AG04449 (cell line): ENCODE measurements at regions of chr11 and their contacts with region 1.

Region 1: GRCh38 chr11:31340903-31341572 is 28.5 kb downstream of the DCDC1 start:
- DNase-seq: no peak
- H3K4me3 ChIP-seq: no peak overlapping the region
- CTCF ChIP-seq: peak; percentile 51

Region 2: DNA sequence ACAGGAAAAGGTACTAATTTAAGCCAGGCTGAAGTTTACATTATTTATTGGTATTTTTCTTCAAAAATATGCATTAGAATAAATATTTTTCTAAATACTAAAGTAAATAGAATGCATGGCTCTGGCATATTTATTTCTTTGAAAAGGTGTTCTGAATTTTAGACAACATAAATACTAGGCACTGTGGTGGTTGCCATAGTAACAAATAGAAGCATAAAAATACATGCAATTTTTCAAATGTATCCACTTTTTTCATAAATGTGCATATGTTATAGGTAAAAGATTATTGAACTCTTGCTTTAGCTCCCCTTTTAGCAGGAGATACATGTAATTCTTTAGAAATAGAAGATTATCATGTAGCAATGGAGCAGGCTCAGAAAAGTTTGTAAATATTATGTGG is 10.1 kb after region 1 on chr11:
- CTCF ChIA-PET with region 1: interaction called, 20 read pairs
- POLR2A ChIA-PET with region 1: no interaction called
- DNase-seq: no peak
- H3K4me3 ChIP-seq: no peak overlapping the region
- CTCF ChIP-seq: no peak